Activated CD4-positive, alpha-beta T cell treated with anti-CD3 and anti-CD28 coated beads, Interleukin-2, amount 10 ng/mL, durations not matched to agents 7 days and 5 days (primary cell): ENCODE measurements at regions of chr10 and their contacts with region 1.

Region 1: GRCh38 chr10:110865809-110866482 is 5.8 kb upstream of the PDCD4 start:
- DNase-seq: no peak
- H3K4me3 Mint-ChIP-seq: no peak overlapping the region
- H3K27ac Mint-ChIP-seq: peak overlapping the region; percentile 98
- H3K4me1 Mint-ChIP-seq: peaks cover 99% of the 10 kb centered on the region
- H3K27me3 Mint-ChIP-seq: no peaks in the 10 kb centered on the region

Region 2: DNA sequence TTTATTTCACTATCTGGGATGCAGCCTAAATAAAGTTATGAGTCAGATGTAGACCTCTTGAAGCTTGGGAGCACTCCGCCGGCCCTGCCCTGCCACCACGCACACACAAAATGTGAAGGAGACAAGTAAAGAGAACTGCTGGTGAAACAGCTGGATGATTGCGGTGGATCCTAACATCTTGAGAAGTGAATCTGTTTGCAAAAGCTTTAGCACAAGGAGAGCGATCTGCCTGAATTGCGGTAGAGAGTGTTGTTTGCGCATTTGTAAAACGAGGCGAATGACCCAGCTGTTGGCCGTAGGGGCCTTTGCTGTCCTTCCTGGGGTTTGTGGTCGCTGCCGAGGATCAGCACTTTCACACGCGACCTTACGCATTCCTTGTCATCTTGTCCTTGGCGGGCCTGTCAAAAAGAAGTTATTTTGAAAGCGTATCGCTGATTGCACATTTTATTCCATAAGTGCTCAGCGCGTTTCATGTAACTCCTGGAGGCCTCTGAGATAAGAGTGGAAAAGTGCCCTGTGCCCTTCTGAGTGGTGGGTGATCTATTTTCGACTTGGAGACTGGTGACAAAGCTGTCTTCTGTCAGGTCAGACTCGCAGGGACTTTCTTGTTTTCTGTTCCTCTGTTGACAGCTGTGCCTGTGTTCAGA is 181.0 kb before region 1 on chr10:
- CTCF ChIA-PET with region 1: no interaction called
- POLR2A ChIA-PET with region 1: no interaction called
- DNase-seq: no peak
- H3K4me3 Mint-ChIP-seq: no peak overlapping the region
- H3K27ac Mint-ChIP-seq: no peak overlapping the region
- H3K4me1 Mint-ChIP-seq: no peaks in the 10 kb centered on the region
- H3K27me3 Mint-ChIP-seq: peaks cover 13% of the 10 kb centered on the region

Region 3: GRCh38 chr10:110758898-110759297 is 107.0 kb before region 1 on chr10:
- CTCF ChIA-PET with region 1: no interaction called
- POLR2A ChIA-PET with region 1: no interaction called
- DNase-seq: no peak
- H3K4me3 Mint-ChIP-seq: no peak overlapping the region
- H3K27ac Mint-ChIP-seq: no peak overlapping the region
- H3K4me1 Mint-ChIP-seq: peaks cover 9% of the 10 kb centered on the region
- H3K27me3 Mint-ChIP-seq: no peaks in the 10 kb centered on the region

Region 4: GRCh38 chr10:110852255-110852896 is 13.6 kb before region 1 on chr10:
- CTCF ChIA-PET with region 1: interaction called, 15 read pairs
- POLR2A ChIA-PET with region 1: interaction called, 3 read pairs
- DNase-seq: peak; percentile 13
- H3K4me3 Mint-ChIP-seq: no peak overlapping the region
- H3K27ac Mint-ChIP-seq: peak overlapping the region; percentile 10
- H3K4me1 Mint-ChIP-seq: peaks cover 70% of the 10 kb centered on the region
- H3K27me3 Mint-ChIP-seq: no peaks in the 10 kb centered on the region

Region 5: GRCh38 chr10:110885932-110886674 is 20.2 kb after region 1 on chr10:
- CTCF ChIA-PET with region 1: no interaction called
- POLR2A ChIA-PET with region 1: no interaction called
- DNase-seq: no peak
- H3K4me3 Mint-ChIP-seq: no peak overlapping the region
- H3K27ac Mint-ChIP-seq: no peak overlapping the region
- H3K4me1 Mint-ChIP-seq: peaks cover 34% of the 10 kb centered on the region
- H3K27me3 Mint-ChIP-seq: no peaks in the 10 kb centered on the region